ENCODE measurements at regions of chr10 and their contacts with region 1.

Region 1: GRCh38 chr10:105950410-105950809 is 1214.1 kb downstream of the SORCS1 start:
- DNase-seq: peak in 2 of 3 donors; percentile 36 to 64
- ATAC-seq: peak; percentile 92 to 95 (median 93)
- H3K4me3 ChIP-seq: no peak overlapping the region
- H3K27ac ChIP-seq: no peak overlapping the region
- H3K4me1 ChIP-seq: no peaks in the 10 kb centered on the region
- H3K27me3 ChIP-seq: no peaks in the 10 kb centered on the region
- CTCF ChIP-seq: peak; percentile 82 to 91 (median 83)
- POLR2A ChIP-seq: no peak

Region 2: GRCh38 chr10:105658696-105659095 is 291.7 kb before region 1 on chr10:
- intact Hi-C with region 1: no loop called
- DNase-seq: no peak
- ATAC-seq: no peak
- H3K4me3 ChIP-seq: no peak overlapping the region
- H3K27ac ChIP-seq: no peak overlapping the region
- H3K4me1 ChIP-seq: no peaks in the 10 kb centered on the region
- H3K27me3 ChIP-seq: no peaks in the 10 kb centered on the region
- CTCF ChIP-seq: no peak
- POLR2A ChIP-seq: no peak

Region 3: GRCh38 chr10:105879401-105879800 is 71.0 kb before region 1 on chr10:
- intact Hi-C with region 1: no loop called
- DNase-seq: no peak
- ATAC-seq: no peak
- H3K4me3 ChIP-seq: no peak overlapping the region
- H3K27ac ChIP-seq: no peak overlapping the region
- H3K4me1 ChIP-seq: no peaks in the 10 kb centered on the region
- H3K27me3 ChIP-seq: no peaks in the 10 kb centered on the region
- CTCF ChIP-seq: no peak
- POLR2A ChIP-seq: no peak

Region 4: GRCh38 chr10:106175760-106176377 is 225.5 kb after region 1 on chr10:
- intact Hi-C with region 1: loop called (anchors 5 to 10 kb)
- DNase-seq: no peak
- ATAC-seq: peak; percentile 54 to 74 (median 64)
- H3K4me3 ChIP-seq: no peak overlapping the region
- H3K27ac ChIP-seq: no peak overlapping the region
- H3K4me1 ChIP-seq: no peaks in the 10 kb centered on the region
- H3K27me3 ChIP-seq: no peaks in the 10 kb centered on the region
- CTCF ChIP-seq: peak; percentile 53 to 67 (median 62)
- POLR2A ChIP-seq: no peak

Measured in right lobe of liver (tissue), 6 donors.